Heart right ventricle (tissue), 16 donors: ENCODE measurements at regions of chr18 and their contacts with region 1.

Region 1: DNA sequence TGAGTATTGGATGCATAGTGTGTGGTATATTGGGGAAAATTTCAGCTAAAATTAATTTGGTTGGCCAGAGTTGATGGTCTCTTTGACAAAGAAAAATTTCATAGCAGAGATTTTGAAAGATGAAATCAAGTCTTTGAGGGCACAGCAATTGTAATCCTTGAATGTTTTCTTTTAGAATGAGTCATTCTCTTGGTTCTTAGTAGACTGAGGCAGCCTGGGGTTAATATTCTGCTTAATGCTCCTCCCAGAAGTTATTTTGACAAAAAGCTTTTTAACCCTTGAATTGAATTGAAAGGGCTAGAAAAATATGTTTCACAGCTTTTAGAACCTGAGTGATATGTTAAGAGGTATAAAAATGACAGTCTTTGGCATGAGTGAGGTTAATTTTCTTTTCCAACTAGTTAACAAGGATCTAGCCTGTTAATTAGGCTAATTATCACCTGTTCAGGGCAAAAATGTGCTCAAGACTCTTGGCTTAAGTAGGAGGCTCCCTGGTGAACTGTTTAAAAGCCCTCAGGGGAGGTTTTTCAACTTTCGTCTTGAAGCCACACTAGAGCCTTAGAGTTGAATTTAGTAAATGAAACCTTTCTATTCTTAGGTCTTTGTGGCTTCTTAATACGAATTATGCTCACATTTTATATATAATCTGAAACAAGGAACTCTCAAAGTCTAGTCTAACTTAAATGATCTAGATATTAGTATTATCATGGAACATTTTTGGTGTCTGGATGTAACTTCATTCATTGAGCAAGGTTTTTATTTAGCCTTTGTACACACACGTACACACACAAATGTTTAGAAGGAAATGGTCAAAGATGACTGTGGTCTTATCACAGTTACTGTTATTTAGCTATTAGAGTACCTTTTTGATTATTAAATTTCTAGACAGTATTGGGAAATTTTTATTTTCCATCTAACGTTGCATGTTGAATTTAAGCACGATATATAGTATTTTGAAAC is 272.5 kb downstream of the ZNF407 start:
- DNase-seq: no peak
- ATAC-seq: no peak
- H3K4me3 ChIP-seq: no peak overlapping the region
- H3K27ac ChIP-seq: no peak overlapping the region
- H3K4me1 ChIP-seq: peaks cover 0 to 31% (median 5%) of the 10 kb centered on the region in 9 donors
- H3K27me3 ChIP-seq: no peaks in the 10 kb centered on the region
- CTCF ChIP-seq: no peak

Region 2: DNA sequence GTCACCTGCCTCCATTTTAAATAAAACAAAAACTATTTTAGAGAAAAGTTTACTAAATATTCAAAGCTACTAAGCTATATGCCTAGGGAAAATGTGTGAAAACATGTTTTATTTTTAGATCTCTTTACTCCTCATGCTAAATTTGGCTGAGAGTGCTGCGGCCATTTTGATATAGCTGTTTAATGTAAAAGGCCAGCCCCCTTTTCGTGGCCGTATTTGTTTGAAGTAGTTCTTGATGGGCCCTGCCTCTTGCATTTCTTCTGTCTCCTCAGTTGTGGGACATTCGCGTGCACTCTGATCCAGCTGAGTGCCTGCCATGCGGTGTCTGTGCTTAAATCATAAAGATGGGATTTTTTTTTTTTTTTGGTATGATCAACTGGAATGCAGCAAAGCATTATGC is 208.5 kb before region 1 on chr18:
- intact Hi-C with region 1: loop called in 1 of 10 experiments (anchors 10 kb)
- DNase-seq: no peak
- ATAC-seq: no peak
- H3K4me3 ChIP-seq: no peak overlapping the region
- H3K27ac ChIP-seq: no peak overlapping the region
- H3K4me1 ChIP-seq: peaks cover 0 to 6% (median 0%) of the 10 kb centered on the region in 9 donors
- H3K27me3 ChIP-seq: no peaks in the 10 kb centered on the region
- CTCF ChIP-seq: no peak